ENCODE measurements at regions of chr14 and their contacts with region 1.

Region 1: DNA sequence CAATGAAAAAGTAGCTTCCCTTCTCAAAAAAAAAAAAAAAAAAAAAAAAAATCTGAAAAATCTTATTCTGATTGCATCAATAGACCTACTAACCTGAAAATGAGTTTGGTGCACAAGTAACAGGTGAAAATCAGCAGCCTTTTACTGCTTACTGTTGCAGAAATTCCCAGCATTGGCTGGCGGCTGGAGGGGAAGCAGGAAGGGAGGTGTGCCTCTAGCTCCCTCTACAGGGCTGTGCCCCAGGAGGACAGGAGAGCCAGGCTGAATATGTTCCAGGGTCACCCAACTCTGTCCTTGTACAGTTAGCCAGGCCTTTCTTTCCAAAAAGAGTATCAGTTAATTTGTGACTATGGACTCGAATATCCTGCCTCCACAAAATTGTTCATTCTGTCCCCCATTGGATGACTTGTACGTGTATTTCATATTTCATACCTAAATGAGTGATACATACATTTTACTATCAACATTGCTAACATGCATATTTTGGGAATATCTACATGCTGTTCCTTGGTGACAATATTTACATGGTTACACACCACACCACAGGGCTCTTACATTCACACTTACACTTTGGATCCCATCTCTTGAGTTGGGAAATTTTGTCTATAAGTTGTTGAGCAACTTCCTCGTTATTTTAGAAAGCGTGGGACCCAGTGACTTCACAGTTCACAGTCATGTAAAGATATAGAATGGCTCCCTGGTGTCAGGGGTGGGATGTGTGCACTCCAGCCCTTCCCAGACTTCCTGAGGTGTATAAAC is 124.8 kb downstream of the SAMD4A start:
- DNase-seq: peak; percentile 48
- CTCF ChIP-seq: peak; percentile 87

Region 2: DNA sequence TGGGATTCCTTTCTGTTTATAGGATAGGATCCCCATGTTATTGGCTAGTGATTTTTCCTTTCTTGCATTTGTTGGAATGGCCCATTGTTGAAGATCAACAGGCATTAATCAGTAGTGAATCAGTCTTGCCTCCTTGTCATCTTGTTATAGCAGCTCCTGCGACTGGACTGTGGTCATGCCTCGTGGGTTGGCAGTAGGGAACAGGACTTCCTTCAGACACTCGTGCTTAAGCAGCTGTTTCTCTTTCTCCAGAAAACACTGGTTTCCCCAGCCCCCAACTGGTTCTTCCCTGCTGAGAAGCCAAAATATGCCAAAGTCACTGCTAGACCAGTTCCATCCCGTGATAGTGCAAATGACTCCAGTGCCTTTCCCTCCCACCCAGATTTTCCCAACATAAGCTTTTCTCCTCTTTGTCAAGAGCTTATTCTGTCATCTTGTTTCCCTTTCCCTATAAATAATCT is 41.3 kb before region 1 on chr14:
- CTCF ChIA-PET with region 1: no interaction called
- POLR2A ChIA-PET with region 1: no interaction called
- DNase-seq: no peak
- CTCF ChIP-seq: no peak

Region 3: GRCh38 chr14:54669721-54670561 is 21.8 kb before region 1 on chr14:
- CTCF ChIA-PET with region 1: interaction called, 10 read pairs
- POLR2A ChIA-PET with region 1: no interaction called
- DNase-seq: no peak
- CTCF ChIP-seq: no peak

Region 4: GRCh38 chr14:54676812-54677708 is 14.6 kb before region 1 on chr14:
- CTCF ChIA-PET with region 1: interaction called, 18 read pairs
- POLR2A ChIA-PET with region 1: no interaction called
- DNase-seq: no peak
- CTCF ChIP-seq: no peak

Measured in GM10248 (cell line).